ENCODE measurements at regions of chr20 and their contacts with region 1.

Region 1: DNA sequence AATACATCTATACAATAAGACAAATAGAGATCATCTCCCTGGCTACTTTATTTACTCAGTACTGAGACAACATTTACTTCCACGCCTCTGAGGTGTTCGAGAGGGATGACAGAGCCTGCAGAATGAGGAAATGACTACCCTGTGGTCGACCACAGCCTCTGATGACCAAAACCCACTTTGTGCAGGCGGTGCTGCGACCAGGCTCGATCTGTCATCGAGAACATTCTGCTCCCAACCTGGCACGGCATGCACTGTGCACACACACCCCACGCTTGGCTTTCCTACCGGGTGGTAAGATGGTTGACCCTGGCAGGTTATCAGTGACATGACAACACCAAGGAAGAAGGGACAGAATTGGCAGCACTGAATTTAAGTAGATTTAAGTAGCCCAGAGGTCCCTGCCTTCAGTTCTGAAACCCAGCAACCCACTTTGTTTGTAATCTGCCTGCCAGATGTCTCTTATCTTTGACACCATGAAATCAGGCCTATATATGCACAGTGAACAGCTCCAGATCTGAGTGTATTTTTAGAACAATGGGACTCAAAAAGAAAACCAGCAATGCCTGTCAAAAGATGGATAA is 42.6 kb downstream of the TTI1 start:
- DNase-seq: peak in 2 of 10 donors; percentile 37 to 67
- H3K4me3 ChIP-seq: no peak overlapping the region
- H3K27ac ChIP-seq: peak overlapping the region in 54 of 59 donors; percentile 12 to 90 (median 71)
- H3K27me3 ChIP-seq: no peaks in the 10 kb centered on the region
- CTCF ChIP-seq: no peak

Region 2: GRCh38 chr20:37564388-37565133 is 426.1 kb before region 1 on chr20:
- intact Hi-C with region 1: loop called in 1 of 2 experiments (anchors 2 kb)
- DNase-seq: peak in 6 of 10 donors; percentile 20 to 79 (median 42)
- H3K4me3 ChIP-seq: peak overlapping the region in 10 of 59 donors; percentile 4 to 40 (median 20)
- H3K27ac ChIP-seq: no peak overlapping the region
- H3K27me3 ChIP-seq: peaks cover 0 to 32% (median 6%) of the 10 kb centered on the region in 45 donors
- CTCF ChIP-seq: peak; percentile 65 to 92 (median 84)

Region 3: DNA sequence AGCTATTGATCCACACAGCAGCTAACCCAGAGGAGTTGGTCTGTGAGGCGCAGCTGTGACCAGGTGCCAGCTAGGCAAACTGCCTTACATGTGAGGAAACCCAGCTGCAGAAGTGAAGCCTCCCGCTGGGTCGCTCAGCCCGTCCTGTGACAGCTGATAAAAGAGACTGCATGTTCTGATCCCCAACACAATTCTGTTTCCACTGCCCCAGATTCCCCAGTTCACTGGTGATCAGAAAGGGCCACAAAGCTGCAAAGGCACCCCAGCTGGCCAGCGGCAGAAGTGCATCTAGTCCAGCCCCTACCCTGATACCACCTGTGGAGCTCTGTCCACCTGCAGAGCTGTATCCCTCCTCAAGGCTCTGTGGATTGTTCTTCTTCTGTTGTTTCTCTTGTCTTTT is 232.3 kb before region 1 on chr20:
- intact Hi-C with region 1: loop called in 1 of 2 experiments (anchors 10 kb)
- DNase-seq: no peak
- H3K4me3 ChIP-seq: no peak overlapping the region
- H3K27ac ChIP-seq: no peak overlapping the region
- H3K27me3 ChIP-seq: no peaks in the 10 kb centered on the region
- CTCF ChIP-seq: no peak

Region 4: DNA sequence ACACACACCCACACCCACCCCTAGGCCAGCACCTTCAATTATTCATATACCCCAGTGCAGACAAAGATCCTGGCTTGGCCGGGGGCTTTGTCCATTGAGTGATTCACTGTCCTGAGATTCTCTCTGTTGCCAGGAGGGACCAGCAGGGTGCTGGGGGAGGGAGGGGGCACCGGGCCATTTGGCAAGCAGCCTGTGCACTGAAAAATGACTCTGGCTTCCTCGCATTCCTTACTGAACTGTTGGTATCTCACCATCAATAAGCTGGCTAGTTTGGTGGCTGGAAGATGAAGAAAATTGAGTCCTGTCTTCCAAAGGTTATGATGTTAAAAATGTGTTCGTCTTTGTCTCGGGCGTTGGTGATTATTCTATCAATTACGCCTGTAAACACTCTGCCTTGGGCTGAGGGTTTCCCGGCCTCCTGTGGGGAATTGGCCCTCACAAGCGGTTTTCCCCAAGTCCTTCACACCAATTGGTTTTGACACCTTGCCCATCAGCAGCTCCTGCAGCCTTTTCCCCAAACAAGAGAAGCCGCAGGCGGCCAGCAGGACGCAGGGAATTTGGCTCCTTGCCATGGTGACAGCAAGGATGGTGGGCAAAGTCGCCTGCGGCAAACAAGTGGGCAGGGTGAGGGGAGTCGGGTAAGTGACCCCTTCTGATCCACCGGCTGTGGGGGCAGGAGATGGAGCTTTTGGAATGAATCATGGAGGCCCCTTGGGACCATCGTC is 82.8 kb before region 1 on chr20:
- intact Hi-C with region 1: loop called in 1 of 2 experiments (anchors 5 kb)
- DNase-seq: no peak
- H3K4me3 ChIP-seq: no peak overlapping the region
- H3K27ac ChIP-seq: no peak overlapping the region
- H3K27me3 ChIP-seq: peaks cover 0 to 87% (median 14%) of the 10 kb centered on the region in 45 donors
- CTCF ChIP-seq: no peak

Region 5: GRCh38 chr20:37914672-37915433 is 75.8 kb before region 1 on chr20:
- intact Hi-C with region 1: loop called in 1 of 2 experiments (anchors 5 kb)
- DNase-seq: no peak
- H3K4me3 ChIP-seq: peak overlapping the region in 54 of 59 donors; percentile 4 to 58 (median 37)
- H3K27ac ChIP-seq: peak overlapping the region in 21 of 59 donors; percentile 2 to 64 (median 29)
- H3K27me3 ChIP-seq: peaks cover 0 to 69% (median 7%) of the 10 kb centered on the region in 45 donors
- CTCF ChIP-seq: no peak

Region 6: DNA sequence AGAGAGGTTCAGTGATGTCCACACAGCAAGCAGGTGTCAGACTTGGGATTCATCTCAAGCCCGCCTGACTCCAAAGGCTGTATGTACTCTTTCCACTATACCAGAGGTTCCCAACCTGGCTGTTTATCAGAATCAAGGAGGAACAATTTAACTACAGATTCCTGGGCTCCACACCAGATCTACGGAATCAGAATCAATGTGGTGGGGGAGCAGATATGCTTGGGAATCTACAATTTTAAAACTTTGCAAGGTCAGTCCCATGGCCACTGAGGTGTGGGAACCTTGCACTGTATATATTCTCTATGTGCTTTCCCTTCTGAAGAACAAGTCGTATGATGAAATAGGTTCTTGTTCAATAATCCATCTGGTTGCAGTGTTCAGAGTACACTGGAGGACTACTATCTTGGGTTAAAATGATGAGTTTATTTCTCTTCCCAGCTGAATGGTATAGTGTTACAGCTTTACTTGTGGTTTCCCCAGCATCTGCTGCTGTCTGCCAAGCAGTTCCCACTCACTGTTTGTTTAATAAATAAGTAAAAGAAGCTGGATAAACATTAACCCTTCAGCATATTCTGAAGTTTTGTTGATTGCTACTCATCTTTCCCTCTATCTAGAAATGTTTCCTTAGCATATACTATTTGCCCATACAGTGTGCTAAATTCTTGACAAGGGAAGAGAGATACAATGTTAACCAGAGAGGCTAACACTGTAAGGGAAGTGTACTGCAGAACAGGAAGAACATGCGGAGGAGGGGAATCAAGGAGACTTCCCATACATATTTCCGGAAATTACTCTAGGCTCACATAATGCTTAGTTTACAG is 32.7 kb after region 1 on chr20:
- intact Hi-C with region 1: no loop called
- DNase-seq: no peak
- H3K4me3 ChIP-seq: no peak overlapping the region
- H3K27ac ChIP-seq: no peak overlapping the region
- H3K27me3 ChIP-seq: no peaks in the 10 kb centered on the region
- CTCF ChIP-seq: no peak